HCT116 (cell line): ENCODE measurements at regions of chr5 and their contacts with region 1.

Region 1: DNA sequence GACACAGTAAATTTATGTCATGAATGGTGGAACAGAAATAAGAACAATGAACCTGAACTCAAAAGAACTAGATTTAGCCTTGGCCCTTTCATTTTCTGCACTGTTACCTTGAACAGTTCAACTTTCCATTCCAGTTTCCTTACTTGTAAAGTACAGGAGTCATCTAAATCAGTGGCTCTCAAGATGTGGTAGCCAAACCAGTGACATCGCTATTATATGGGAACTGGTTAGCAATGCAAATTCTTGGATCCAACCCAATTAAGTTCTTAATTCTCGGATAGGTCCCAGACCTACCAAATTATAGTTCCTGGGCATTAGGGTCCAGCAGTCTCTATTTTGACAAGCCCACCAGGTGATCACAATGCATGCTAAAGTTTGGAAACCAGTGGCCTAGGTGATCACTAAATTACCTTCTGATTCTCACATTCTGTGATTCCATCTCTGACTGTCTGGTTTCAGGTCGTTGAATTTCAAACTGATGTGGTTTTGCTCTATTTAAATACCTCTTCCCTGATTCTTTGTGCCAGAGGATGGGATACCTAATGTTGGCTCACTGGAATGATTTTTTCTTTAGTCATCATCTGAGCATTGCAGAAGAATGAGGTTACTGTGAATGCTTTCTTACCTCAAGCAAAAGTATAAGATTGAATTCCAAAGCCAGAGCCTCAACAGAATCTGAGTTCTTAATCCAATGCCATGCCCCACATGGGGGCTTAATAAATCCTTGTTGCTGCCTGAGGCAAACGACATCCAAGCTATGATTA is 253.8 kb downstream of the ENC1 start:
- DNase-seq: no peak
- ATAC-seq: no peak
- H3K4me3 ChIP-seq: no peak overlapping the region
- H3K27ac ChIP-seq: no peak overlapping the region
- H3K4me1 ChIP-seq: no peaks in the 10 kb centered on the region
- H3K27me3 ChIP-seq: no peaks in the 10 kb centered on the region
- CTCF ChIP-seq: no peak
- POLR2A ChIP-seq: no peak
- RAD21 ChIP-seq: no peak

Region 2: GRCh38 chr5:74094096-74094781 is 292.5 kb before region 1 on chr5:
- CTCF ChIA-PET with region 1: no interaction called
- POLR2A ChIA-PET with region 1: no interaction called
- RAD21 ChIA-PET with region 1: no interaction called
- intact Hi-C with region 1: no loop called
- DNase-seq: no peak
- ATAC-seq: no peak
- H3K4me3 ChIP-seq: no peak overlapping the region
- H3K27ac ChIP-seq: no peak overlapping the region
- H3K4me1 ChIP-seq: no peaks in the 10 kb centered on the region
- H3K27me3 ChIP-seq: no peaks in the 10 kb centered on the region
- CTCF ChIP-seq: no peak
- POLR2A ChIP-seq: no peak
- RAD21 ChIP-seq: no peak

Region 3: GRCh38 chr5:74342948-74343682 is 43.6 kb before region 1 on chr5:
- CTCF ChIA-PET with region 1: no interaction called
- POLR2A ChIA-PET with region 1: no interaction called
- RAD21 ChIA-PET with region 1: no interaction called
- intact Hi-C with region 1: loop called (anchors 1 kb)
- DNase-seq: no peak
- ATAC-seq: peak; percentile 20; the same call in 1 of the 2 replicates
- H3K4me3 ChIP-seq: no peak overlapping the region
- H3K27ac ChIP-seq: no peak overlapping the region
- H3K4me1 ChIP-seq: peaks cover 6 to 8% of the 10 kb centered on the region in 2 experiments; a peak in 2 of 4 replicates
- H3K27me3 ChIP-seq: no peaks in the 10 kb centered on the region
- CTCF ChIP-seq: no peak
- POLR2A ChIP-seq: no peak
- RAD21 ChIP-seq: no peak

Region 4: DNA sequence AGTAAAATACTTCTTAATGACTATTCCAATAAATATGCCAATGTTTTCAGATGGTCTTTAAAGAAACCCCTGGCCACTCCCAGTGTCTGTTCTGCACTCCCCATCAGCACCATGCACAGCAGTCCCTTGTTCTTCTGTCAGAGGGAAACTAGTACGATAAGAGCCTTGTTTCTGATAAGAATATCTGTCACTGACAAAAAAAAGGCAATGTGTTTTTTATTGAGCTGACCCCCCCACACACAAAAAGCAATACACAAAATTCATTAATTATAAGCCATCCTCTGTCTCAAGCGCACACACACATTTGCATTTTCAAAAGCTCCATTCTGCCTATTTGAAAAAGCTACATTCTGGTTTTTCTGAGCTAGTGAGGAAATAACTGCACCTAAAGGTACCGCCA is 134.6 kb after region 1 on chr5:
- CTCF ChIA-PET with region 1: no interaction called
- POLR2A ChIA-PET with region 1: no interaction called
- RAD21 ChIA-PET with region 1: no interaction called
- intact Hi-C with region 1: no loop called
- DNase-seq: no peak
- ATAC-seq: no peak
- H3K4me3 ChIP-seq: no peak overlapping the region
- H3K27ac ChIP-seq: no peak overlapping the region
- H3K4me1 ChIP-seq: peaks cover 0 to 4% of the 10 kb centered on the region in 2 experiments; a peak in 2 of 4 replicates
- H3K27me3 ChIP-seq: no peaks in the 10 kb centered on the region
- CTCF ChIP-seq: no peak
- POLR2A ChIP-seq: no peak
- RAD21 ChIP-seq: no peak